ENCODE measurements at regions of chr3 and their contacts with region 1.

Region 1: GRCh38 chr3:24683633-24684384 is 189.2 kb upstream of the THRB start:
- DNase-seq: peak; percentile 47

Region 2: DNA sequence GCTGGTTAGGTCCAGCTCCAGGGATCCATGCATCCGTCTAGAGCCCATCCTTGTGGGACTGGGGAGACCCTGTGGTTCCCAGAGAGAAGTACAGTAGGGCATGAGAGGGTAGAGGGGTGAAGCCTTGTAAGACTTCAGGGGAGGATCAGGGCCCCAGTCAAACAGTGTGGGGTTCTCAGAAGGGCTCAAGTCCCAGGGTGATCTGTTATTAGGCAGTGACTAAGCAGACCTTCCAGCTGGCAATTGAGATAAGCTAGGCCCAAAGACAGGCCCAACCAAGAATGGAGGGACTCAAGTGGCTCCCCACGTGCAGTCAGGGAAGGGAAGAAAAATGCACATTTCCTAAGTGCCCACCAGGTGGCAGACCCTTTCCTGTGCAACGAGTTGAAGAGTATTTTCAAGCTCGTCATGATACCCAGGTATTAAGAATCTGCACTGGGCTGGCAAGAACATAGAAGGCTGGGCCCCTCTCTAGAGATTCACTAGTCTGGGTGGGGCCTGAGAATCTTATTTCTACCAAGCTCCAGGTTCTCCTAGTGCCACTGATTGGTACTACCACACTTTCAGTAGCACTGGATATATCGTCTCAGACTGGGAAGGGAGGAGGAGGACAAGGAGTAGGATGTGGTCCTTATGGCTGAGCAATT is 497.9 kb before region 1 on chr3:
- CTCF ChIA-PET with region 1: interaction called, 11 read pairs
- POLR2A ChIA-PET with region 1: no interaction called
- DNase-seq: peak; percentile 64

Region 3: GRCh38 chr3:24377218-24377993 is 306.4 kb before region 1 on chr3:
- CTCF ChIA-PET with region 1: no interaction called
- POLR2A ChIA-PET with region 1: no interaction called
- DNase-seq: no peak

Region 4: GRCh38 chr3:24832878-24833277 is 149.1 kb after region 1 on chr3:
- CTCF ChIA-PET with region 1: no interaction called
- POLR2A ChIA-PET with region 1: no interaction called
- DNase-seq: no peak

Measured in HEK293T (cell line).